ENCODE measurements at regions of chr15 and their contacts with region 1.

Region 1: GRCh38 chr15:66946578-66947164 is 118.7 kb upstream of the SMAD3 start:
- DNase-seq: peak; percentile 39
- ATAC-seq: peak; percentile 87
- H3K4me3 ChIP-seq: no peak overlapping the region
- H3K27ac ChIP-seq: no peak overlapping the region
- H3K4me1 ChIP-seq: peaks cover 6% of the 10 kb centered on the region
- H3K27me3 ChIP-seq: no peaks in the 10 kb centered on the region; a peak in 1 of 4 replicates
- CTCF ChIP-seq: peak; percentile 85 to 97 (median 95)
- EP300 ChIP-seq: no peak
- POLR2A ChIP-seq: no peak
- RAD21 ChIP-seq: peak; percentile 98

Region 2: GRCh38 chr15:66622591-66623022 is 324.1 kb before region 1 on chr15:
- CTCF ChIA-PET with region 1: no interaction called
- POLR2A ChIA-PET with region 1: no interaction called
- RAD21 ChIA-PET with region 1: no interaction called
- SMC1A ChIA-PET with region 1: no interaction called
- in situ Hi-C with region 1: no loop called
- intact Hi-C with region 1: no loop called
- DNase-seq: no peak
- ATAC-seq: no peak
- H3K4me3 ChIP-seq: no peak overlapping the region
- H3K27ac ChIP-seq: no peak overlapping the region
- H3K4me1 ChIP-seq: 0 out of 2 replicates have a peak, but pooled peaks cover 2% of the 10 kb centered on the region
- H3K27me3 ChIP-seq: peaks cover 0 to 6% of the 10 kb centered on the region in 2 experiments; a peak in 2 of 4 replicates
- CTCF ChIP-seq: no peak
- EP300 ChIP-seq: no peak
- POLR2A ChIP-seq: no peak
- RAD21 ChIP-seq: no peak

Region 3: GRCh38 chr15:66774001-66774814 is 172.5 kb before region 1 on chr15:
- CTCF ChIA-PET with region 1: no interaction called
- POLR2A ChIA-PET with region 1: no interaction called
- RAD21 ChIA-PET with region 1: no interaction called
- SMC1A ChIA-PET with region 1: no interaction called
- in situ Hi-C with region 1: no loop called
- intact Hi-C with region 1: no loop called
- DNase-seq: no peak
- ATAC-seq: peak; percentile 98
- H3K4me3 ChIP-seq: no peak overlapping the region
- H3K27ac ChIP-seq: no peak overlapping the region
- H3K4me1 ChIP-seq: no peaks in the 10 kb centered on the region
- H3K27me3 ChIP-seq: no peaks in the 10 kb centered on the region
- CTCF ChIP-seq: peak; percentile 66 to 87 (median 82)
- EP300 ChIP-seq: no peak
- POLR2A ChIP-seq: no peak
- RAD21 ChIP-seq: peak; percentile 75

Region 4: DNA sequence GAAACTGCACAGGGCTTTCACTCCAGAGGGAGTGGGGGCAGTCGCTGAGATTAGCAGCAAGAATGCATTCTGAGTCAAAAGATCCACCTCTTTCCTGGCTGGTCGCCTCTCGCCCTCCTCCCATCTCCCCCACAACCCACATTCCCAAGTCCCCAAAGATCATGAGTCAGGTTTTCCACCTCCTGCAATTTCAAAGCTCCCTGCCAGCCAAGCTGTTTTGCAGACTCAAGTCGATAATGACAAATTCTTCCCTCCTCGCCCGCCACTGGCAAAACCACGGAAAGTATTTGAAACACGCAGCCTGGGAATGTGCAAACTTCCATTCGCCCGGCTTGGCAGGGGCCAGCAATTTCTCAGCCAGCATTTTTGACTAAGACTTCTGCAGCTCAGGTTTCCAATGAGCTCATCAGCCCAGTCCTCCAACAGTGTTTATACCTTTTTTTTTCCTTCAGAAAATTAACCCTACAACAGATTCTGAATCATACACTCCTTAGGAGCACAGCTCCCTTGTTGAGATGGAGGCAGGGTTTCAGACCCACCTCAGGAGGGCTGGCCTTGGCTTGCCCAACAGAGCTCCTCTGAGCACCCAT is 63.3 kb before region 1 on chr15:
- CTCF ChIA-PET with region 1: no interaction called
- POLR2A ChIA-PET with region 1: no interaction called
- RAD21 ChIA-PET with region 1: no interaction called
- SMC1A ChIA-PET with region 1: no interaction called
- in situ Hi-C with region 1: no loop called
- intact Hi-C with region 1: no loop called
- DNase-seq: no peak
- ATAC-seq: no peak
- H3K4me3 ChIP-seq: no peak overlapping the region
- H3K27ac ChIP-seq: no peak overlapping the region
- H3K4me1 ChIP-seq: no peaks in the 10 kb centered on the region
- H3K27me3 ChIP-seq: peaks cover 0 to 4% of the 10 kb centered on the region in 2 experiments; a peak in 3 of 4 replicates
- CTCF ChIP-seq: no peak
- EP300 ChIP-seq: no peak
- POLR2A ChIP-seq: no peak
- RAD21 ChIP-seq: no peak

Region 5: GRCh38 chr15:66901336-66902100 is 45.2 kb before region 1 on chr15:
- CTCF ChIA-PET with region 1: interaction called, 6 read pairs
- POLR2A ChIA-PET with region 1: no interaction called
- RAD21 ChIA-PET with region 1: no interaction called
- SMC1A ChIA-PET with region 1: no interaction called
- in situ Hi-C with region 1: no loop called
- intact Hi-C with region 1: loop called (anchors 2 kb)
- DNase-seq: no peak
- ATAC-seq: no peak
- H3K4me3 ChIP-seq: no peak overlapping the region
- H3K27ac ChIP-seq: no peak overlapping the region
- H3K4me1 ChIP-seq: no peaks in the 10 kb centered on the region
- H3K27me3 ChIP-seq: no peaks in the 10 kb centered on the region
- CTCF ChIP-seq: no peak
- EP300 ChIP-seq: no peak
- POLR2A ChIP-seq: no peak
- RAD21 ChIP-seq: no peak

Region 6: DNA sequence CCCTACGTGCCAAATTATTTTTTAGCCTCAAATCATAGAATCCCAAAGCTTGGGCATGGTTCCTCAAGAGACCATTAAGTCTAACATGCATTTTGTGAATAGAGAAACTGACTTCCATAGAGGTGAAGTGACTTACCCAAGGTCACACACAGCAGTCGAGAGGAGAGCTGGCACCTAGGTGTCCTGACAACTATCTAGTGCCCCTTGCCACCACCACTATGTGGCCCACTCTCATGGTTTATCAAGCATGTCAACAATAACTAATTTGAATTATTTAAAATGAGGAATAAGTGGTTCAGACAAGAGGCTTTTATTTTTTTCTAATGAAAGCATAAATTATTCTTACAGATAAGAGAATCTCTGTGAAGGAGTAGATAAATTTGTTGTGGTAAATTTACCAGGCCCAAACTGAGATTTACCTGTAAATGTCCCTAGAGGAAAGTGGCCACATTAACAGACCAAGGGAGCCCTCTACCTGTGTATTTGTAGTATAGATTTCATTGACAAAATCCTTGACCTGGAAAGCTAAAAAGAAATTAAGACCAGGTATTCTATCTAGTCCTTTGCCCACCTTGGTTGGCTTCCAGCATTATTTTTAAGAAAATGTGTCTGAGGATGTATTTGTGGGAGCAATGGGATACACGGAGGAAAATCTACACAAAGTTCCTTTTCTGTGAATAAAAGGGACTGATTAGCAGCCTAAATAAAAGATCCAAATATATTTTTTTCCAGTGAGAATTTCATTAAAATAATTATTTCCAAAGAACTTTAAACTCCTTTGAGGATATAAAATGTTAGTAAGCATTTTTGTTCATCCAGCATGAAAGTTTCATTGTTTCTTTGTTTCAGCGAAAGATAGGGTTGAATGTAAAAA is 357.1 kb after region 1 on chr15:
- CTCF ChIA-PET with region 1: interaction called, 108 read pairs
- POLR2A ChIA-PET with region 1: no interaction called
- RAD21 ChIA-PET with region 1: interaction called, 88 read pairs
- SMC1A ChIA-PET with region 1: interaction called, 77 read pairs
- in situ Hi-C with region 1: loop called (anchors 5 kb)
- intact Hi-C with region 1: loop called (anchors 1 kb)
- DNase-seq: peak; percentile 24
- ATAC-seq: peak; percentile 70
- H3K4me3 ChIP-seq: no peak overlapping the region
- H3K27ac ChIP-seq: no peak overlapping the region
- H3K4me1 ChIP-seq: no peaks in the 10 kb centered on the region
- H3K27me3 ChIP-seq: no peaks in the 10 kb centered on the region
- CTCF ChIP-seq: peak; percentile 38 to 68 (median 46); a peak in 5 of 6 replicates
- EP300 ChIP-seq: no peak
- POLR2A ChIP-seq: no peak
- RAD21 ChIP-seq: peak; percentile 94